PC-9 (cell line): ENCODE measurements at regions of chr13 and their contacts with region 1.

Region 1: DNA sequence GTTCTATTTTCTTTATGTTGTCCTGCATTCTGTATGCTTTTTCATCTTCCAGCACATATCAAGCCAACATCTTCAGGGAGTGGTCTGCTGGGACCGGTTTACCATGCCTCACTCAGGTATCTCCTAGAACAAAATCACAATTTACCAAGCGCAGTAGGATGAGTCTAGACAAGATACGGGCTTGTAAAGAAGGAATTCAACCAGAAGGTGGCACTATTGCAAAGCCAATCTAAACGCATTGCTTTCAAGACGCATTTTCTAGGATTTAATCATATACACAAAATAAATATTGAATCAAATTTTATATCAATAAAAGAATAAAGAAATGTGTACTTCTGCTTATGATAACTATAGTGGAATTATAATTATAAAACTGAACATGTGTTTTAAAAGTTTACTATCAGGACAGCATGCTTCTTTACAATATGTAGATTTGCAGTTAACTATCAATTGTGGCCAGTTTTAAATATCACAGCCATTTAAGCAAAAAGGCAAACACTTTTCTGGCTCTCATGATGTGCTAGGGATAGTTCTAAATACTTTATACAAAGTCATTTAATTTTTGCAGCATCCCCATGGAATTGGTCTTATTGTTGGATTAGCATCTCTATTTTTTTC is 16.1 kb upstream of the TPP2 start:
- DNase-seq: peak; percentile 23 to 65
- H3K4me3 ChIP-seq: no peak overlapping the region
- H3K27ac ChIP-seq: no peak overlapping the region
- H3K4me1 ChIP-seq: no peaks in the 10 kb centered on the region
- H3K27me3 ChIP-seq: peaks cover 10% of the 10 kb centered on the region; the same call in 1 of the 2 replicates
- CTCF ChIP-seq: peak; percentile 92

Region 2: GRCh38 chr13:101763191-101763590 is 817.5 kb before region 1 on chr13:
- CTCF ChIA-PET with region 1: interaction called, 12 read pairs
- POLR2A ChIA-PET with region 1: no interaction called
- intact Hi-C with region 1: no loop called
- DNase-seq: peak in 1 of 2 experiments; percentile 51
- H3K4me3 ChIP-seq: no peak overlapping the region
- H3K27ac ChIP-seq: no peak overlapping the region
- H3K4me1 ChIP-seq: no peaks in the 10 kb centered on the region
- H3K27me3 ChIP-seq: no peaks in the 10 kb centered on the region
- CTCF ChIP-seq: no peak

Region 3: GRCh38 chr13:102724923-102725322 is 144.3 kb after region 1 on chr13:
- CTCF ChIA-PET with region 1: no interaction called
- POLR2A ChIA-PET with region 1: interaction called, 7 read pairs
- intact Hi-C with region 1: loop called (anchors 2 kb)
- DNase-seq: peak; percentile 12 to 87
- H3K4me3 ChIP-seq: no peak overlapping the region
- H3K27ac ChIP-seq: 0 out of 2 replicates have a peak overlapping the region, but pooled peaks have one; percentile 38
- H3K4me1 ChIP-seq: peaks cover 12% of the 10 kb centered on the region
- H3K27me3 ChIP-seq: no peaks in the 10 kb centered on the region
- CTCF ChIP-seq: peak; percentile 78

Region 4: DNA sequence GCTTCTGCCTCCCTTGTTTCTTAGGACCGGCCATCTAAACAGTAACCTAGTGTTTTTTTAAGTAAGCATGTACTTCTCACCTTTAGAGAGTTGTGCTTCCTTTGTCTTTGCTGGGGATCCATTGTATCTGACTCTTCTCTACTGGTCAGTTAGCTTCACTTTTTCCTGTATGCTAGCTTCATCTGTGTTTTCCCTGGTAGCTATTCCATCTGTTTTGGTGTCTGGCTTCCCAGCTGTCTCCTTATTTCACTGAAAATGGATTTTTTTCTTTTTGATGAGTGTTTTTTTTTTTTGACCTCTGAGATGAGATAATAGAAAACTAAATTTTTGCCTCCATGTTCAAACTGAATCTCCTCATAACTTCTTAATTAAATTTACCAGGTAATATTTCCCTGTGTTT is 1122.6 kb after region 1 on chr13:
- CTCF ChIA-PET with region 1: no interaction called
- POLR2A ChIA-PET with region 1: no interaction called
- intact Hi-C with region 1: no loop called
- DNase-seq: no peak
- H3K4me3 ChIP-seq: no peak overlapping the region
- H3K27ac ChIP-seq: no peak overlapping the region
- H3K4me1 ChIP-seq: no peaks in the 10 kb centered on the region
- H3K27me3 ChIP-seq: no peaks in the 10 kb centered on the region
- CTCF ChIP-seq: no peak